MCF 10A (cell line): ENCODE measurements at regions of chr12 and their contacts with region 1.

Region 1: GRCh38 chr12:49763006-49763591 is 21.7 kb downstream of the TMBIM6 start:
- DNase-seq: peak; percentile 57
- H3K4me3 Mint-ChIP-seq: no peak overlapping the region
- H3K27ac Mint-ChIP-seq: peak overlapping the region; percentile 61
- H3K4me1 Mint-ChIP-seq: no peaks in the 10 kb centered on the region
- H3K27me3 Mint-ChIP-seq: no peaks in the 10 kb centered on the region
- CTCF ChIP-seq: peak; percentile 53

Region 2: DNA sequence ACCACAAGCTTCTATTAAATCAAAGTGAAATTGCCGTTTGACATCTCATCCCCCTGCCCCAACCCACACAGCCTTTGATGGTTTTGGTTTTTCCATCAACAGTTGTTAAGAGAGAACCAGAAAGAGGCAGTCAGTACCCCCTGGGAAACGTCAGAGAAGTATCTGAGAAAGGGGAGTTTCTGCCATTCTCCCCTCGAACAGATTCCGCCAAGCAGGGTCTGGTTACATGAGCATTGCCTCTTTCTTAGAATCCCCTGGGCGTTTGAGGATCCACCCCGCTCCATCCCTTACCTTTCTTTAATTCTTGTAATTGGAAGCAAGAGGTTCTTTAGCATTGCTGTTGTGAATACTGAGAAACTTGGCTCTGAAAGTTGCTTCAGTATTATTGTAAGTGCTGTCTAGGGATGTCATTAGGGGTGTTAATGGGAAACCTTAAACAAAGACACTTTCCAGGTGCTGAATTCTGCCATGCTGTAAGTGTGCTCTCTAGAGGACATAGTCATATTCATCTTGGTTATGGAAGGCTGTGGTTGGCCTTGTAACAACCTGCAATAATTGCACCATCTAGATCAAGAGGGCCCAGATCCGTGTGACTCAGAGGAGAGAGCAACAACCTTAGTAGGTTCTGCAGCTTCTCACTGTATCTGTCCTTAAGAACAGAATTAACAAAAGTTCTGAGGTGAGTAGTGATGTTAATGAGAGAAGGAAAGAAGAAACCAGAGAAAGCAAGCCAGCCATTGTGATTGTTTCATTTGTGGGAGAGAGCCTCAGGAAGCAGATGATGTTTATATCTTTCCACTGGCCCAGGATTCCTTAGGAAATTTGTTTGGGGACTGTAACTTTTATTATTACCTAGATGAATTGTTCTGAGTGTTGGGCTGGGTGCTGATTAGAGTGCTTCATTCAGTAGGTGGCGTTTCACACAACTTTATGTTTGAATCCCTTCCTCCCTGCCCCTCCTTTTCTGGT is 12.8 kb before region 1 on chr12:
- CTCF ChIA-PET with region 1: interaction called, 15 read pairs
- POLR2A ChIA-PET with region 1: interaction called, 5 read pairs
- intact Hi-C with region 1: no loop called
- DNase-seq: peak; percentile 92
- H3K4me3 Mint-ChIP-seq: peak overlapping the region; percentile 42
- H3K27ac Mint-ChIP-seq: peak overlapping the region; percentile 81
- H3K4me1 Mint-ChIP-seq: peaks cover 19% of the 10 kb centered on the region
- H3K27me3 Mint-ChIP-seq: no peaks in the 10 kb centered on the region
- CTCF ChIP-seq: no peak